Activated T-helper 2 cell treated with anti-CD3 and anti-CD28 coated beads, Interferon-gamma antibody, Interleukin-2, Interleukin-4, amounts not matched to agents 10 μg/mL and 5 μg/mL and 100 μg/mL, durations not matched to agents 14 hours and 24 hours and 36 hours (primary cell): ENCODE measurements at regions of chr12 and their contacts with region 1.

Region 1: DNA sequence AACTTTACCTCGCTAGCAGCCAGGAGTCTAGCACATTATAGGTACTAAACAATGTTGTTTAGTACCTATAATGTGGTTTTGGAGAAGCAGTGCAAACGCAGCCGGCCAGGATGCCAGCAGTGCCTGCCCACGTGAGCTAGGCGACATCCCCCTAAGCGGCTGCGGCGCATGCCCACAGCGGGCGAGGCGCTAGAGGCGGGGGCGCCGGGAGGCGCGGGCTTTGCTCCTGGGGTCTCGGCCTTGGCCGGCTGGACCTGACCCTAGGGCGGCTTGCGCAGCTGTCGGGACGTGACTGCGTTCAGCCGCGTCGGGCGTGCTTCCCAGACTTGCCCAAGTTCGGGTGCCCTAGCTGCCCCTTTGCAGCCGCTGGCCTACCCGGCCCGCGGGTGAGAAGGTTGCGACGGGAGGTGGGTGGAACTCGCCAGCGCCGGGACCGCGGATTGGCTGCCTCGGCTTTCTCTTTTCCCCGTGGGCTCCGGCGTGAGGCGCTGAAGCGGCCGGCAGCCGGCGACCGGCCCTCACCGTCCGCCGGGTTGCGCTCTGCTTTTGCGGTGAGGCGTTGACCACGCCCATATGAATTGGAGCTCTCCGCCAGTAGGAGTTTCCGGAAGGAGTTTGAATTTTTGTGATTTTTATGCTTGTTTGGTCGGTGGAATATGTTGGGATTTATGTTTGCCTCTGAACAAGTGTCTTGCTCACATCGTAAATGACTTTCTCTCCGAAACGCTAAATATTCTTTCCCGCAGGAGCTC is at the start of gene TMEM19:
- DNase-seq: peak; percentile 79
- H3K4me3 Mint-ChIP-seq: peak within 1 kb of the TSS; percentile 90
- H3K27ac Mint-ChIP-seq: peak within 1 kb of the TSS; percentile 95
- H3K4me1 Mint-ChIP-seq: peaks cover 21% of the 10 kb centered on the region
- H3K27me3 Mint-ChIP-seq: no peaks in the 10 kb centered on the region
- total RNA-seq, gene TMEM19: 11.0 and 14.3 TPM in 2 replicates

Region 2: DNA sequence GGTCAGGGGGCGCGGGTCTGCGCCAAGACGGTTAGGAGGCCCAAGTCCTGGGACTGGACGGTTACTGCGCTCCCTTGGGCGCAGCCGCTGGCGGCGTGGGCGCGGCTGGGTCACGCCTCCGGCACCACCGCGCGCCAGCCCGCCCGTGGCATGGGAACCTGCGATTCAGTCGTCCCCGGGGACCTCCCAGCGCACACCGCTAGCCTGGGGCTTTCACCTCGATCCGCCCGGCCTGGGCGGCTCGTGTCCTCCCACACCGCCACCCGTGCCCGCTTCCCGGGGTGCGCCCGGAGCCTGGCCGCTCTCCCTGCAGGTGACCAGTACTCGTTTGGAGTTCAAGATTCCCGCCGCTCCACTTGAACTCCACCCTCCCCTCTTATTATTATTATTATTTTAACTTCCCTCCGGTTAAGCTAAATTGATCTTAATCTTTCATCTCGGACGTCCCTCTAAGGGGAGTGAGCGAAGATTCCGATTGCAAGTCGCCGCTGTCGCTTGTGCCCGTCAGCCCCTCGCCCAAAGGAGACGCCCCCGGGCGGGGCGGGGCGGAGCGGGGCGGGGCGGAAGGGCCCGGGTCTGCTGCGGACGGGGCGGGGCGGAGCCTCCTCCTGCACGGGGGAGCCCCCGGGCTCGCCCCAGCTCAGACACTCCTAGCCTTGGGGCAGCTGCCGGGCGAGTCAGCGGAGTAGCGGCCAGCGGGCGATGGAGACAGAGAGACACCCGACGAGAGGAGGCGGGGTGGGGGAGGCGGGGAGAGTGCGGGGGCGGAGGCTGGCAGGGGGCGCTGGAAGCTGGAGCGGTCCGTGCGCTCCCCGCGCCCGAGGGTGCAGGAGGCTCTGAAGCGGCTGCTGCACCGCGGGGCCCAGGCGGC is 1320.2 kb before region 1 on chr12 and contains the start of gene KCNMB4:
- intact Hi-C with region 1: loop called (anchors 10 kb)
- DNase-seq: peak; percentile 68
- H3K4me3 Mint-ChIP-seq: peak within 1 kb of the TSS; percentile 87
- H3K27ac Mint-ChIP-seq: no peak within 1 kb of the TSS
- H3K4me1 Mint-ChIP-seq: peaks cover 21% of the 10 kb centered on the region
- H3K27me3 Mint-ChIP-seq: peaks cover 33% of the 10 kb centered on the region
- total RNA-seq, gene KCNMB4: 0.37 and 0.55 TPM in 2 replicates

Region 3: DNA sequence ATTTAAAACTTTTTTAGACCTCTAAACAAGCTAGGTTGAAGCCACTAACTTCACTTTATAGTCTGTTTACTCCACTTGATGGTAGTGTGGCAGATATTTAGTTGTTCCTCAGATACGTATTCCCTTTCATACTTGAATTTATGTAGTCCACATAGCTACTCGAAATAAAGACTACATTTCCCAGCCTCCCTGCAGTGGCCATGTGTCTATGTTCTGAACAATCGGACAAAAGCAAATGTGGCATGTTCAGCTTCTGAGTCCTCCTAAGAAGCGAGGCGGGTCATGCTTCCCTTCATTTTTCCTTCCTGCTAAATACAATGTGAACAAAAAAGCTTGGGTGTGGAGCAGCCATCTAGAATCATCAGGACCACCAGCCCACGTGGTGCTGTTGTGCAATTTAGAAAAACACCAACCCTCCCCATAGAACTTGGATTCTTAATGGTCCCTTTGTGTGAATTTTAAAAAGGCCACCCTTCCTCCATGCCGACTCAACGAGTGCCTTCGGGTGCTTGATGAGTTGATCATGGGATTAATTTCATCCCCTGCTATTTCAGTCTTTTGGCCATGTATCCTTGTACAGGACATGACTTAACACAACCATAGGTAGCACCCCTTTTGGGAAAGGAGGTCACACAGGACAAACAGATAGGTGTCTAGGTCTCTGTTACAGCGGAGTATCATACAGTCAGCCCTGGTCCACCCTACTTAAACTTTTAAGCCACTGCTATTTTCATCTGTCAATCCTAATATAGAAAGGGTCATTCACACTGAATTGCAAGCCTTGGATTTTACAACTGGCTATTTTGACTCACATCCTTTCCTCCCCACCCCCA is 83.1 kb before region 1 on chr12:
- intact Hi-C with region 1: no loop called
- DNase-seq: no peak
- H3K4me3 Mint-ChIP-seq: no peak overlapping the region
- H3K27ac Mint-ChIP-seq: no peak overlapping the region
- H3K4me1 Mint-ChIP-seq: no peaks in the 10 kb centered on the region
- H3K27me3 Mint-ChIP-seq: peaks cover 1% of the 10 kb centered on the region

Region 4: DNA sequence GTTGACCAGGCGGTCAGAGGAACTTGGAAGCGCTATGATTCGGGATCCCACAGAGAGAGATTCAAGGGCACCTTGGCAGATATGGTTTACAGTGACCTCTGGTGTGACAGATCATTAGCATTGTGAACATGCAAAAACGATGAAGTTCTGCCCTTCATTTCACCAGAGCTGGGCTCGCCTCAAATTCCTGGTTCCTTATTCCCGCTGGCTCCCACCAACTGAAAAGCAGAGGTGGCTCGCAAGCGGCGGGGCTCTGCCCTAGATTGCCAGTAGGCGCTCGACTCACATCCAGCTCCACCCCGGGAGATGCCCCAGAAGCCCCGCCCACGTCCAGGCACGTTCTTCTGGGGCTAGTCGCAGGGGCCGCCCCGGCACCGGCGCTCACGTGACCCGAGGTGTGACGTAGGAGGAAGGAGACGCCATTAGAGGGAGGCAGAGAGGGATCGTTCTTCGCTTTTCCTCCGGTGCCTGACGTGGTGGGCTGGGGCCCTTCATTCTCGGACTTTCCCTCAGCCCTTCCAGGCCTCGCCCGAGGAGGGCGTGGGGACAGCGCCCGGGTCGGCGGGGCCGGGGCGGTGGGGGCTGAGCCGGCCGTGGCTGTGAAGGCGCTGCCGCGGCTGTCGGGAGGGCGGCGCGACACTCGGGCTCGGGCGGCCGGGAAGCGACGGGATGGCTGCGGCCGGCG is 68.5 kb after region 1 on chr12 and contains the start of gene RAB21:
- intact Hi-C with region 1: loop called (anchors 1 kb)
- DNase-seq: peak; percentile 97
- H3K4me3 Mint-ChIP-seq: peak within 1 kb of the TSS; percentile 93
- H3K27ac Mint-ChIP-seq: peak within 1 kb of the TSS; percentile 95
- H3K4me1 Mint-ChIP-seq: peaks cover 22% of the 10 kb centered on the region
- H3K27me3 Mint-ChIP-seq: peaks cover 24% of the 10 kb centered on the region
- total RNA-seq, gene RAB21: 95.4 and 96.1 TPM in 2 replicates